Tibial artery (tissue), 4 donors: ENCODE measurements at regions of chr14 and their contacts with region 1.

Region 1: DNA sequence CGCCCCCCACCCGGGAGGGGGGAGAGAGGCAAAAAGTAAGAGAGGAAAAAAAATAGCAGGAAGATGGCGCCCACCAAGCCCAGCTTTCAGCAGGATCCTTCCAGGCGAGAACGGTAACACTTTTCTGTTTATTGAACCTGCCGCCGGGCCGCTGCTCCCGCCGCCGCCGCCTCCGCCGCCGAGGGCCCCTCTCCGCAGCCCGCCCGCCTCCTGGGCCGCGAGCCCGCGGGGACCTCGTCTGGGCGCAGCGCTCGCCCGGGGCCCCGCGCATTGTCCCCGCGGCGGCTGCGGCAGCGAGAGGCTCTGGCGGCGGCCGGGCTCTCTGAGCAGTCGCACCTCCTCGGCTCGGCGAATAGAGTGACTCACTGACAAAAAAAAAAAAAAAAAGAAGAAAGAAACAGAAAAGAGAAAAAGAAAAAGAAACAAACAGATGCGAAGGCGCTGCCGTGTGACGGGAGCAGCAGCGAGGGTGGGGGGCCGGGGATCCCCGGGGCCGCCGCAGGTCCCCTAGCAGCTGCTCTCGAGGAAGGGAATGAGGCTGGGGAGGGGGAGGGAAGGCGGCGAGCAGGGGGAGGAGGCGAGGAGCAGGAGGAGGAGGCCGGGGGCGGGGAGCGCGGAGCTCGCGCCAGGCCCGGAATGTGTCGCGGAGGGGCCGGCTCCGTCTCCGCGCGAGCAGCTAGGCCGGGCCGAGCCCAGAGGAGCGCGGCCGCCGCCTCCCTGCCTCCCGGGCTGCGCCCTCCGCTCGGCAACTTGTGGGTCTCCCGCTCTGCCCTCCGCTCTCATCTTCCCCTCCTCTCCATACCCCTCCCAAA is 781 bp downstream of the NPAS3 start:
- DNase-seq: peak; percentile 80 to 90
- H3K4me3 ChIP-seq: peak overlapping the region; percentile 77 to 80
- H3K27ac ChIP-seq: peak overlapping the region; percentile 83 to 86
- H3K4me1 ChIP-seq: peaks cover 0 to 22% (median 12%) of the 10 kb centered on the region in 4 donors
- H3K27me3 ChIP-seq: peaks cover 0 to 21% of the 10 kb centered on the region in 2 donors
- CTCF ChIP-seq: no peak

Region 2: DNA sequence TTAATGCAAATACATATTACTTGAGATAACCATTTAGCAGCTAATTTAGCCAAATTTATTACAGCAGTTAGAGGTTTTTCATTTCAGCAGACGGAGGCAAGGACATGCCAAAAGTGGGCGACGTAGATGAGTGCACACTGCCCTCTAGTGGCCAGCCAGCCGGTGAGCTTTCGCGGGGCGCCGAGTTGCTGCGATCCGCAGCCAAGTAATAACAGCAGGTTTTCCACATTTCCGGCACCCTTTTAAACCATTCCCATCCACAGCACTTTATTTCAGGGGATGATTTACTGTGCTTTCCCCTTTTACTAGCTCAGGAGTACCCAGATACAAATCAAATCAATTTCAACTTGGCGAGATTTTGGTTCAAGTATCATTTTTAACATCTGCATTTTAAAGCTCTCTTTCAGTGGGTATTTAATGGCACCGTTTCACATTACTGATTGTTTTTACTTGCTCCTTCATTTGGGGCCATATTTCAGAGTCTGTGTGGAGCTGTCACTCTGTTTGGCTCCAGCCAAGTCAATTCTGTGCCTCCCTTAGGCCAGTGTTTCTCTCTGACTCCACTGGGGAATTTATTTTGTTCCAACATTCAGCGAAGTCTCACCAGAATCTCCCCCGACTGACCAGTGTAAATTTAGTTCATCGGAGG is 853.4 kb after region 1 on chr14:
- intact Hi-C with region 1: loop called (anchors 10 kb)
- DNase-seq: peak; percentile 75 to 88
- H3K4me3 ChIP-seq: peak overlapping the region; percentile 29 to 35
- H3K27ac ChIP-seq: peak overlapping the region; percentile 63 to 66
- H3K4me1 ChIP-seq: peaks cover 0 to 22% (median 17%) of the 10 kb centered on the region in 4 donors
- H3K27me3 ChIP-seq: no peaks in the 10 kb centered on the region
- CTCF ChIP-seq: peak; percentile 88 to 94

Region 3: GRCh38 chr14:33950320-33951182 is 1011.1 kb after region 1 on chr14 and contains the start of gene EGLN3:
- intact Hi-C with region 1: loop called (anchors 10 kb)
- DNase-seq: peak; percentile 81 to 95
- H3K4me3 ChIP-seq: peak within 1 kb of the TSS; percentile 87 to 95
- H3K27ac ChIP-seq: peak within 1 kb of the TSS; percentile 82 to 89
- H3K4me1 ChIP-seq: peaks cover 0 to 49% (median 21%) of the 10 kb centered on the region in 4 donors
- H3K27me3 ChIP-seq: no peaks in the 10 kb centered on the region
- CTCF ChIP-seq: no peak